ENCODE measurements at regions of chr16 and their contacts with region 1.

Region 1: GRCh38 chr16:31215287-31216162 is 1.4 kb downstream of the PYDC1 start:
- DNase-seq: no peak
- H3K4me3 Mint-ChIP-seq: peak overlapping the region; percentile 74
- H3K27ac Mint-ChIP-seq: no peak overlapping the region
- H3K4me1 Mint-ChIP-seq: peaks cover 23% of the 10 kb centered on the region
- H3K27me3 Mint-ChIP-seq: peaks cover 31% of the 10 kb centered on the region

Region 2: DNA sequence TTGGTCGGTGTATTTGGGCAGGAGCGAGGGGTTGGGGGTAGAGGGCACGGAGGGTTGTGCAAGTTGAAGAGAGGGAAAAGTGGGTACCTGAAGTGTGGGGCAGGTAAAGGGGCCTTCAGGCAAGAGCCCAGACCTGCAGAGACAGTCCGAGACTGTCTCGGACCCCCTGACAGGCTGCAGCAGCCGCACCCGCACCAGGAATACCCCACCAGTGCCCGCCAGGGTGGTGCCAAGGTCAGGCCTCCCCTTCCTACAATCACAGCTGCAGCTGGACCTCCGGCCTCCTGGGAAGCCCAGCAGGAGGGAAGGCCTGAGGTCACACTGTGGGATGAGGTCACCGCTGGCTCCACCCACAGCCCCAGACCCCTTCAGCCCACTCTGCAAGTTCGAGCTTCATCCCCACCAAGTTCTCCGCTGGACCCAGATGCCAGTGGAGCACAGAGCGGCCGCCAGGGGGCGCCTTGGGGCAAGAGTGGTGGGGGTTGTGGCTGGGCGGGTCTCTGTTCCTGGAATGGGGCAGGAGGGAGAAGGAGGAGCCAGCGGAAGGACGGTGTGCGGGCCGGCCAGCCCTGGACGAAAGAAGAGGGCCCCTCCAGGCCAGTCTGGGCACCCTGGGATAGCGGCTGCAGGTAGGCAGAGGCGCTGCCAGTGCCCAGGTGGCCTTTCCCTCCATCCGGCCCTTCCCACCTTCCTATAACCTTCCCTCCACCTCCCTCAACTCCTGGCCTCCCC is 230.7 kb before region 1 on chr16 and contains the start of gene HSD3B7:
- intact Hi-C with region 1: no loop called
- DNase-seq: peak; percentile 73
- H3K4me3 Mint-ChIP-seq: peak within 1 kb of the TSS; percentile 7
- H3K27ac Mint-ChIP-seq: no peak within 1 kb of the TSS
- H3K4me1 Mint-ChIP-seq: no peaks in the 10 kb centered on the region
- H3K27me3 Mint-ChIP-seq: no peaks in the 10 kb centered on the region
- total RNA-seq, gene HSD3B7: 2.1 and 3.3 TPM in 2 replicates

Region 3: GRCh38 chr16:31142109-31143010 is 73.2 kb before region 1 on chr16:
- intact Hi-C with region 1: no loop called
- DNase-seq: peak; percentile 98
- H3K4me3 Mint-ChIP-seq: peak overlapping the region; percentile 78
- H3K27ac Mint-ChIP-seq: peak overlapping the region; percentile 88
- H3K4me1 Mint-ChIP-seq: peaks cover 12% of the 10 kb centered on the region
- H3K27me3 Mint-ChIP-seq: peaks cover 13% of the 10 kb centered on the region

Region 4: GRCh38 chr16:31168848-31169247 is 46.7 kb before region 1 on chr16:
- intact Hi-C with region 1: no loop called
- DNase-seq: no peak
- H3K4me3 Mint-ChIP-seq: no peak overlapping the region
- H3K27ac Mint-ChIP-seq: no peak overlapping the region
- H3K4me1 Mint-ChIP-seq: no peaks in the 10 kb centered on the region
- H3K27me3 Mint-ChIP-seq: peaks cover 2% of the 10 kb centered on the region

Region 5: DNA sequence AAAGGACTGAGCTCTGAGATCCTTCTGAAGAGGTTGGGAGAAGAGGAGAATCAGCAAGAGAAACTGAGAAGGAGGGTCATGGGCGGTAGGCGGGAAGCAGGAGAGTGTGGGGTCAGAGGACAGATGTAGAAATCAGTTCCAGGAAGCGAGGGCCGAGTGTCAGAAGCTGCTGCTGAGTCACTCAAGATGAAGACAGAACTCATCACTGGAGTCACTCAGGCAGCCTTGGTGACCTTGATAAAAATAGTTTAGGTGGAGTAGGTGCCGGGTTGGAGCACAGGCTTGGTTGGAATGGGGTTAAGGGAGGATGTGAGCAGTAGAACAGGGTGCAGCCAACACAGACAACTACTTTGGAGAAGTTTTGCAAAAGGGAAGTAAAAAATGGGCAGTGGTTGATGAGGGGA is 38.1 kb after region 1 on chr16:
- intact Hi-C with region 1: loop called (anchors 2 kb)
- DNase-seq: peak; percentile 50
- H3K4me3 Mint-ChIP-seq: peak overlapping the region; percentile 82
- H3K27ac Mint-ChIP-seq: peak overlapping the region; percentile 96
- H3K4me1 Mint-ChIP-seq: peaks cover 45% of the 10 kb centered on the region
- H3K27me3 Mint-ChIP-seq: no peaks in the 10 kb centered on the region

Region 6: DNA sequence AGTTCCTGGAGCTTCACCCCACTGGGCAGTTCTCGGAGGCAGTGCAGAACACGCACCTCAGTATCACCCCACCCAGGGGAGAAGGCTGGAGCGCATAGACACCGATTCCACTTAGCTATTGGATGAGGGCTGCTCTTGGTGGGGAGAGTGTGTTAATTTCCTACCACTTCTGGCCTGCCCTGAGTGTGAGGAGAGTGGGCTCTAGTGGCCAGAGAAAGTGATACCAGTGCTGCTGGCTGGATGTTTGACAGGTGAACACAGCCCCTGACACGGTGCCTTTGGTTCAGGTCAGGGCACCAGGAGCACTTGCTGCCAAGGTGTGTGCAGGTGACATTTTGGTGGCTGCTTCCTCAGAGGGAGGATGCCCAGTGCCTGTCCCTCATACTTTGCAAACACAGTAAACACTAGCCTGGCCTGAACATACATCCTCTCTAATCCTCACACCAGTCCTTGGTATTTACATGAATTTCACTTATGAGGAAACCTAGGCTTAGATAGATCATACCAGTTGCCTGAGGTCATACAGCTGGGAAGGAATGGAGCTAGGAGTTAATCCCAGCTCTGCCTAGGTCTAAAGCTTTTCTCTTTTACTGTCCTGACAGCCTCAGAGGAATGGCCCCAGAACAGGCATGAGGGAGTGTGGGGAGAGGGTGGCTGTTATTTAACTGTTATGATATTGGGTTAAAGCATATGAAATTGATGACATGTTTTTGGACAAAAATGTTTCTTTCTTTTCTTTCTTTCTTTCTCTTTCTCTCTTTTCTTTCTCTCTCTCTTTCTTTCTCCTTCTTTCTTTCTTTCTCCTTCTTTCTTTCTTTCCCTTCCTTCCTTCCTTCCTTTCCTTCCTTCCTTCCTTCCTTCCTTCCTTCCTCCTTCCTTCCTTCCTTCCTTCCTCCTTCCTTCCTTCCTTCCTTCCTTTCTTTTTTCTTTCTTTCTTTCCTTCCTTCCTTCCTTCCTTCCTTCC is 118.4 kb after region 1 on chr16:
- intact Hi-C with region 1: loop called (anchors 5 kb)
- DNase-seq: no peak
- H3K4me3 Mint-ChIP-seq: no peak overlapping the region
- H3K27ac Mint-ChIP-seq: peak overlapping the region; percentile 40
- H3K4me1 Mint-ChIP-seq: peaks cover 45% of the 10 kb centered on the region
- H3K27me3 Mint-ChIP-seq: peaks cover 3% of the 10 kb centered on the region

Measured in activated T-helper 1 cell treated with anti-CD3 and anti-CD28 coated beads, Interleukin-12 subunit alpha, Interleukin-12 subunit beta, Interleukin-2, Interleukin-4 antibody, amounts not matched to agents 30 ng/mL and 10 ng/mL and 1 ng/mL, durations not matched to agents 14 hours and 24 hours and 36 hours (primary cell).